ENCODE measurements at regions of chr6 and their contacts with region 1.

Region 1: DNA sequence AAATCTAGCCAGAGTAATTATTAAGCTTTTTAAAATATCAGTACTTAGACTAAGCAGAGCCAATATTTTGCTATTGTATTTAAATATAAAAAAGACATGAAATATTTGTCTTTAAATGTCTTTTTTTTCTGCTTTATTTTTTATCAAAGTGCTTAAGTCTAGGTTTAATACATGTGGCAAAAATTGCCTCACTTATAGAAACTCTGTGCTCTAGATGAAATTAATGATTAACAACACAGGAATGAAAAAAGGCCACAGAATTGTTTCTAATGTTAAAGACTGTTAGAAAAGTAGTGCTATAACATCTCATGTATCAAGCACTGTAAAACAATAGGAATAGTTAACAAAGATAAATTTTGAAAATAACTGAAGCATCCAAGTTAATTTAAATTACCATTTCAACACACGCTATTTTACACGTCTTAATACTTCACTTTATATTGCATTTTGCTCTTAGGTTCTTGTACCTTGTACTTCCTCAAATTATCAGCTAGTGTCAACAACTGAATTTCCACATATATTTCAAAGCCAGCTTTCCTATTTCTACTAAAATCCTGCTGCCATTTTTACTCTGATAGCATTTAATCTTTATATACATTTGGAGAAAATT is 1515.1 kb downstream of the HACE1 start:
- DNase-seq: no peak
- H3K4me3 ChIP-seq: no peak overlapping the region
- H3K4me3 Mint-ChIP-seq: no peak overlapping the region
- H3K27ac Mint-ChIP-seq: no peak overlapping the region
- H3K4me1 ChIP-seq: peaks cover 7% of the 10 kb centered on the region
- H3K4me1 Mint-ChIP-seq: peaks cover 6% of the 10 kb centered on the region
- H3K27me3 ChIP-seq: no peaks in the 10 kb centered on the region
- H3K27me3 Mint-ChIP-seq: peaks cover 5% of the 10 kb centered on the region
- CTCF ChIP-seq: no peak

Region 2: DNA sequence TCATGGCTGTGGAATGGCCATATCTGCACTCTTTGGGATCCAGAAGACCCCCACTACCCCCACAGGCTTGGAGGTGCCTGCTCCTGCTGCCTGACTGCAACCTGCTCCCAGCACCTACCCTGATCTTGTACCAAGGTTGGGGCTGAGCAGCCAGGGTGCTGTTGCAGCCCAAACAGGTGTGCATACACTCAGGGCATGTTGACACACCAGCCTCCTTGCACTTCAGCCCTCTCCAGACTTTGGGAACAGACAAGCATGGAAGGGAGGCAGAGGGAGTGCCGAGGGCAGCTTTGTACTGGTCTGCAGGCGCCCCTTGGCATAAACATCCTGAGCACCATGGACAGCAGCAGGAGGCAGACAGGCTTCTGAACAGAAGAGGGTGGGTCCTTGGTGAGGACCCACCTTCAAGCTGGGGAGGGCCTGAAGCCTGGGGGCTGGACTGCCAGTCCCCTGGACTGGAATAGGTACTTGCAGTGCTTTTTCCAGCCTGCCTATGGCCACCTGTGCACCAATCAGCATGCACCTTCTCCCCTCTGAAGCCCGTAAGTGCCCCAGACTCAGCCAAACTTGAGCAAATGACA is 160.7 kb before region 1 on chr6:
- CTCF ChIA-PET with region 1: no interaction called
- POLR2A ChIA-PET with region 1: no interaction called
- intact Hi-C with region 1: no loop called
- DNase-seq: peak in 1 of 2 experiments; percentile 21
- H3K4me3 ChIP-seq: no peak overlapping the region
- H3K4me3 Mint-ChIP-seq: no peak overlapping the region
- H3K27ac Mint-ChIP-seq: no peak overlapping the region
- H3K4me1 ChIP-seq: no peaks in the 10 kb centered on the region
- H3K4me1 Mint-ChIP-seq: no peaks in the 10 kb centered on the region
- H3K27me3 ChIP-seq: no peaks in the 10 kb centered on the region
- H3K27me3 Mint-ChIP-seq: peaks cover 7% of the 10 kb centered on the region
- CTCF ChIP-seq: no peak

Region 3: DNA sequence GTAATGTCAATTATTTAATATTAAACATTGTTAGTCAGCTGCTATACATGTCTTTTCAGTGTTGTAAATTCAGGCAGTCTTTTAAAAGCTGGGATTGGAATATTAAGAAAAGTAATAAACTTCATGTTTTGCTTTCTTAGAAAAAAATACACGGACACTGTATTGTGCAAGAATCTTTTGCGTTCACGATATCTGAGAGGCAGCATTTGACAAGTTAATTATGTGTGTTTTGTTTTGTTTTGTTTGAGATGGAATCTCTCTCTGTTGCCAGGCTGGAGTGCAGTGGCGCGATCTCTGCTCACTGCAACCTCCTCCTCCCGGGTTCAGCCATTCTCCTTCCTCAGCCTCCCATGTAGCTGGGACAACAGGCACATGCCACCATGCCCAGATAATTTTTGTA is 146.3 kb before region 1 on chr6:
- CTCF ChIA-PET with region 1: no interaction called
- POLR2A ChIA-PET with region 1: no interaction called
- intact Hi-C with region 1: no loop called
- DNase-seq: no peak
- H3K4me3 ChIP-seq: no peak overlapping the region
- H3K4me3 Mint-ChIP-seq: no peak overlapping the region
- H3K27ac Mint-ChIP-seq: no peak overlapping the region
- H3K4me1 ChIP-seq: no peaks in the 10 kb centered on the region; the same call in 1 of the 2 replicates
- H3K4me1 Mint-ChIP-seq: no peaks in the 10 kb centered on the region
- H3K27me3 ChIP-seq: no peaks in the 10 kb centered on the region
- H3K27me3 Mint-ChIP-seq: no peaks in the 10 kb centered on the region
- CTCF ChIP-seq: no peak

Region 4: DNA sequence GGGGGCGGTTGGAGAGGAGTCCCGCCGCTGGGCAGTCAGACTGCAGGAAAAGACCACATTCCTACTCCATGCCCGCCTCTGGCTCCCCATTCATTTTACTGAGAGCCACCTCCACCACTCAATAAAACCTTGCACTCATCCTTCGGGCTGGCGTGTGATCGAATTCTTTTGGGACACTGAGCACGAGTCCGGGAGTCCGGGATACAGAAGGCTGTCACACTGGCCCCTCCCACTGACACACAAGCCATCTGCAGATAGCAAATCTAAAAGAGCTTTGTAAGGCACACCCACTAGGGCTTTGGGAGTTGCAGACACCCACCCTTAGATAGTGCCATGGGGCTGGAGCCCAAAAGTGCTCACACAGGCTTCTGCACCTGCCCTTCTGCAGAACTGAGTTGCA is 12.1 kb before region 1 on chr6:
- CTCF ChIA-PET with region 1: no interaction called
- POLR2A ChIA-PET with region 1: no interaction called
- intact Hi-C with region 1: no loop called
- DNase-seq: no peak
- H3K4me3 ChIP-seq: no peak overlapping the region
- H3K4me3 Mint-ChIP-seq: no peak overlapping the region
- H3K27ac Mint-ChIP-seq: no peak overlapping the region
- H3K4me1 ChIP-seq: no peaks in the 10 kb centered on the region
- H3K4me1 Mint-ChIP-seq: no peaks in the 10 kb centered on the region
- H3K27me3 ChIP-seq: no peaks in the 10 kb centered on the region
- H3K27me3 Mint-ChIP-seq: no peaks in the 10 kb centered on the region
- CTCF ChIP-seq: no peak

Region 5: DNA sequence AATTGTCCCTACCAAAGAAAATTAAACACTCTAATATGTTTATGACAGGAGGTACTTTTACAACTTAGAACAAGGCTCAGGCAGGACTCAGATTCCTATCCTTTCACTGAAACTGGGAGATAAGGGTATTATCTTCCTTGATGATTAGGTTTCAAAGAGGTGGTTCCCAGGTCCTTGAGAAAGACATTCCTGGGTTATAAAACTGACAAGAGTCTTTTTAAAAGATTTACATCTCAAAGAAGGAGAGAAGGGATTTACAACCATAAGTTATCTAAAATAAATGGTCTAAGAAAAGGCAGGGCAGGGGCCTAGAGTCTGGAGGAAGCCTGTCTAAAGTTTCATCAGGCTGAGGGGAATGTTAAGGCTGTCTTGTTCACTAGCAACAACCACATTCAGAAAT is 22.6 kb after region 1 on chr6:
- CTCF ChIA-PET with region 1: no interaction called
- POLR2A ChIA-PET with region 1: no interaction called
- intact Hi-C with region 1: loop called (anchors 2 kb)
- DNase-seq: peak; percentile 51 to 70
- H3K4me3 ChIP-seq: no peak overlapping the region
- H3K4me3 Mint-ChIP-seq: peak overlapping the region; percentile 35
- H3K27ac Mint-ChIP-seq: peak overlapping the region; percentile 79
- H3K4me1 ChIP-seq: peaks cover 18% of the 10 kb centered on the region
- H3K4me1 Mint-ChIP-seq: peaks cover 25% of the 10 kb centered on the region
- H3K27me3 ChIP-seq: no peaks in the 10 kb centered on the region
- H3K27me3 Mint-ChIP-seq: no peaks in the 10 kb centered on the region
- CTCF ChIP-seq: no peak